ENCODE measurements at regions of chr6 and their contacts with region 1.

Region 1: GRCh38 chr6:100664274-100665040 is 199.7 kb upstream of the SIM1 start:
- DNase-seq: peak; percentile 30
- ATAC-seq: no peak
- H3K4me3 ChIP-seq: no peak overlapping the region
- H3K4me3 Mint-ChIP-seq: no peak overlapping the region
- H3K27ac ChIP-seq: peak overlapping the region in 1 of 2 donors; percentile 3
- H3K27ac Mint-ChIP-seq: no peak overlapping the region
- H3K4me1 ChIP-seq: no peaks in the 10 kb centered on the region
- H3K4me1 Mint-ChIP-seq: peaks cover 5% of the 10 kb centered on the region
- H3K27me3 ChIP-seq: no peaks in the 10 kb centered on the region
- H3K27me3 Mint-ChIP-seq: no peaks in the 10 kb centered on the region
- CTCF ChIP-seq: peak; percentile 88

Region 2: GRCh38 chr6:100001915-100002388 is 662.5 kb before region 1 on chr6:
- CTCF ChIA-PET with region 1: interaction called, 13 read pairs
- POLR2A ChIA-PET with region 1: no interaction called
- intact Hi-C with region 1: no loop called
- DNase-seq: peak; percentile 37
- ATAC-seq: peak; percentile 49
- H3K4me3 ChIP-seq: no peak overlapping the region
- H3K4me3 Mint-ChIP-seq: no peak overlapping the region
- H3K27ac ChIP-seq: no peak overlapping the region
- H3K27ac Mint-ChIP-seq: no peak overlapping the region
- H3K4me1 ChIP-seq: no peaks in the 10 kb centered on the region
- H3K4me1 Mint-ChIP-seq: no peaks in the 10 kb centered on the region
- H3K27me3 ChIP-seq: peaks cover 0 to 5% (median 2%) of the 10 kb centered on the region in 4 experiments
- H3K27me3 Mint-ChIP-seq: peaks cover 29% of the 10 kb centered on the region
- CTCF ChIP-seq: peak; percentile 97

Region 3: GRCh38 chr6:100116411-100117194 is 547.9 kb before region 1 on chr6:
- CTCF ChIA-PET with region 1: interaction called, 6 read pairs
- POLR2A ChIA-PET with region 1: no interaction called
- intact Hi-C with region 1: loop called (anchors 2 kb)
- DNase-seq: peak; percentile 31
- ATAC-seq: no peak
- H3K4me3 ChIP-seq: no peak overlapping the region
- H3K4me3 Mint-ChIP-seq: no peak overlapping the region
- H3K27ac ChIP-seq: no peak overlapping the region
- H3K27ac Mint-ChIP-seq: no peak overlapping the region
- H3K4me1 ChIP-seq: no peaks in the 10 kb centered on the region
- H3K4me1 Mint-ChIP-seq: no peaks in the 10 kb centered on the region
- H3K27me3 ChIP-seq: no peaks in the 10 kb centered on the region
- H3K27me3 Mint-ChIP-seq: peaks cover 6% of the 10 kb centered on the region
- CTCF ChIP-seq: peak; percentile 63

Region 4: DNA sequence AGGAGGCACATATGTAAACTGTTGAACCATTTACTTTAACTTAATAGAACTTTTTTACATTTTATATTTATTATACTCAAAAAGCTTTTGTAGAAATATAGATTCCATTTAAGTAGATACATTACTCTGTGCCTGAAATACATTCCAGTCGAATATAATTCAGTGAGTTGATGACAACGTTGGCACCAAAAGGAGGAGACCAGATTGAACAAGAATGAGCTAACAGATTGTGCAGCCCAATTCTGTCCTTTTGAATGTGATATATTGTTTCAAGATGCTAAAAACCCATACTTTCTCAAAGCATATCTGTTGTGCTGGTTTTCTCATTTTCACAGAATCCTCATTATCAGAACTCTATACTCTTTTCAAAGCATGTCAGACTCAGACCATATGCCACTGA is 52.4 kb before region 1 on chr6:
- CTCF ChIA-PET with region 1: no interaction called
- POLR2A ChIA-PET with region 1: no interaction called
- intact Hi-C with region 1: no loop called
- DNase-seq: no peak
- ATAC-seq: no peak
- H3K4me3 ChIP-seq: no peak overlapping the region
- H3K4me3 Mint-ChIP-seq: no peak overlapping the region
- H3K27ac ChIP-seq: no peak overlapping the region
- H3K27ac Mint-ChIP-seq: no peak overlapping the region
- H3K4me1 ChIP-seq: no peaks in the 10 kb centered on the region
- H3K4me1 Mint-ChIP-seq: no peaks in the 10 kb centered on the region
- H3K27me3 ChIP-seq: no peaks in the 10 kb centered on the region
- H3K27me3 Mint-ChIP-seq: no peaks in the 10 kb centered on the region
- CTCF ChIP-seq: no peak

Measured in B cell (primary cell).